A549 (cell line): ENCODE measurements at regions of chr19 and their contacts with region 1.

Region 1: GRCh38 chr19:35601971-35602370 is 10.6 kb upstream of the HAUS5 start:
- DNase-seq: no peak
- ATAC-seq: no peak
- H3K4me3 ChIP-seq: no peak overlapping the region
- H3K27ac ChIP-seq: no peak overlapping the region
- H3K4me1 ChIP-seq: no peaks in the 10 kb centered on the region
- CTCF ChIP-seq: no peak
- EP300 ChIP-seq: no peak
- POLR2A ChIP-seq: no peak
- RAD21 ChIP-seq: no peak

Region 2: DNA sequence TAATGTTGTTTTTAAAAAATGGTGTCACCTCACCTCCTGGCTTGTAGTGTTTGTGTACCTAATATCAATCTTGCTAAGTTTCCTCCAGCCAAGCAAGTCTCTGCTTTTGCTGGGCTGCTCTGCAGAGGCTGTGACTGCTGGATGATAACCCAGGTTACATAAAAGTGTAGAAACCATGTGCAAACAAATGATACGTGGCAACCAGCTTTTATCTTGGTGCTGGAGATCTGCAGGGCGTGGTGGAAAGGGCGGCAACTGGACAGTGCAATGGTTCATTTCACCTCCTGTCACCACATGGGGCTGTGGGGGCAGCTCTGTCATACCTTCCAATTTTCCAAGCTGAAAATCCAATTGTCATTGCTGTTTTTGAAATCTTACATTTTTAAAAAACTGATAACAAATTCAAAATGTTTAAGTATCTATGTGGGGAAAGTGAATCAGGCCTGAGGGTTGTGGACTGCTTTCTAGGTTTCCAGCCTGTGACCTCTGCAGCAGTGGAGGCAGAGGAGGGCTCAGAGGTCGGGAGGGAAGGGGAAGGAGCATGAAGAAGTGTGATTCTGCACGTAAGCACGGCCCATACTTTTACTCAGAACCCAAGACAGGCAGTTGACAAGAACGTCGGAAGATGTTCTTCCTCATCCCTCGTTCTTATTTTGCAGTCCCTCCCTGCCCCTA is 221.4 kb before region 1 on chr19:
- CTCF ChIA-PET with region 1: no interaction called
- POLR2A ChIA-PET with region 1: no interaction called
- DNase-seq: no peak
- ATAC-seq: no peak; a peak in 1 of 6 replicates
- H3K4me3 ChIP-seq: no peak overlapping the region
- H3K27ac ChIP-seq: no peak overlapping the region
- H3K4me1 ChIP-seq: no peaks in the 10 kb centered on the region
- CTCF ChIP-seq: no peak
- EP300 ChIP-seq: no peak
- POLR2A ChIP-seq: no peak
- RAD21 ChIP-seq: no peak

Region 3: GRCh38 chr19:35585848-35586247 is 16.1 kb before region 1 on chr19 and contains the start of gene PMIS2:
- CTCF ChIA-PET with region 1: interaction called, 16 read pairs
- POLR2A ChIA-PET with region 1: no interaction called
- DNase-seq: peak; percentile 37 to 60
- ATAC-seq: peak in 1 of 2 experiments; percentile 76; a peak in 3 of 6 replicates
- H3K4me3 ChIP-seq: no peak within 1 kb of the TSS
- H3K27ac ChIP-seq: no peak within 1 kb of the TSS
- H3K4me1 ChIP-seq: no peaks in the 10 kb centered on the region
- CTCF ChIP-seq: no peak
- EP300 ChIP-seq: no peak
- POLR2A ChIP-seq: no peak
- RAD21 ChIP-seq: no peak
- polyA plus RNA-seq, gene PMIS2: not detected in 2 replicates

Region 4: GRCh38 chr19:35612559-35613321 is 10.8 kb after region 1 on chr19 and contains the start of gene HAUS5:
- CTCF ChIA-PET with region 1: interaction called, 15 read pairs
- POLR2A ChIA-PET with region 1: interaction called, 4 read pairs
- DNase-seq: peak; percentile 98 to 99
- ATAC-seq: peak; percentile 92 to 96
- H3K4me3 ChIP-seq: peak within 1 kb of the TSS; percentile 75
- H3K27ac ChIP-seq: peak within 1 kb of the TSS; percentile 72 to 87
- H3K4me1 ChIP-seq: peaks cover 9% of the 10 kb centered on the region; the same call in 2 of the 3 replicates
- CTCF ChIP-seq: no peak; the same call in 2 of the 3 replicates
- EP300 ChIP-seq: no peak
- POLR2A ChIP-seq: peak; percentile 84
- RAD21 ChIP-seq: no peak; a peak in 1 of 5 replicates
- polyA plus RNA-seq, gene HAUS5: 7.2 and 7.3 TPM in 2 replicates